Common myeloid progenitor, CD34-positive (primary cell): ENCODE measurements at regions of chr14 and their contacts with region 1.

Region 1: GRCh38 chr14:50619556-50620141 is 48.5 kb downstream of the SAV1 start:
- DNase-seq: peak; percentile 44 to 65 (median 59)
- H3K4me3 ChIP-seq: no peak overlapping the region
- H3K27ac ChIP-seq: no peak overlapping the region
- H3K4me1 ChIP-seq: no peaks in the 10 kb centered on the region
- H3K27me3 ChIP-seq: no peaks in the 10 kb centered on the region

Region 2: GRCh38 chr14:50647282-50647681 is 27.6 kb after region 1 on chr14:
- CTCF ChIA-PET with region 1: interaction called, 10 read pairs
- POLR2A ChIA-PET with region 1: no interaction called
- DNase-seq: no peak
- H3K4me3 ChIP-seq: no peak overlapping the region
- H3K27ac ChIP-seq: no peak overlapping the region
- H3K4me1 ChIP-seq: no peaks in the 10 kb centered on the region
- H3K27me3 ChIP-seq: no peaks in the 10 kb centered on the region

Region 3: GRCh38 chr14:50792051-50792477 is 172.4 kb after region 1 on chr14:
- CTCF ChIA-PET with region 1: no interaction called
- POLR2A ChIA-PET with region 1: no interaction called
- DNase-seq: peak in 1 of 3 donors; percentile 25
- H3K4me3 ChIP-seq: no peak overlapping the region
- H3K27ac ChIP-seq: no peak overlapping the region
- H3K4me1 ChIP-seq: peaks cover 0 to 9% (median 6%) of the 10 kb centered on the region in 4 experiments
- H3K27me3 ChIP-seq: no peaks in the 10 kb centered on the region